GM10248 (cell line): ENCODE measurements at regions of chr1 and their contacts with region 1.

Region 1: GRCh38 chr1:86704458-86704971 is at the start of gene SH3GLB1:
- DNase-seq: peak; percentile 90
- CTCF ChIP-seq: peak; percentile 88

Region 2: GRCh38 chr1:86380257-86380861 is 324.2 kb before region 1 on chr1:
- CTCF ChIA-PET with region 1: interaction called, 17 read pairs
- POLR2A ChIA-PET with region 1: no interaction called
- DNase-seq: peak; percentile 37
- CTCF ChIP-seq: peak; percentile 70

Region 3: DNA sequence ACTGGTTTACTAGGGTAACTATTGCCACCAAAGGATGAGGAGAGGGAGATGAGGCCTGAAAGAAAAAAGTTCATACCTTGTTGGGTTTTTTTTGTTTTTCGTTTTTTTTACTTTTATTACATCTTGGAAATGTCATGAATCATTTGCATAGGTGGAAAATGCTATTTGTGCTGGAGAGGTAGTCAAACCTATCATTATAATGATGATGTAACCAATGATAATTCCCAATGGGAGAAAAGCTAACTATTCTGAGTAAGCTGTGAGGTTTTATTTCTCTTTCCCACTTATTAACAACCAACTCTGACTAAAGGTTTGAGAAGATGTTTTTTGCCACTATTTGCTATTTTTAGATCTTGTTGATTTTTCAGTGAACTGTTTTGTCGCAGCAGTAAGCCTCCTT is 28.8 kb after region 1 on chr1:
- CTCF ChIA-PET with region 1: interaction called, 18 read pairs
- POLR2A ChIA-PET with region 1: no interaction called
- DNase-seq: no peak
- CTCF ChIP-seq: no peak

Region 4: DNA sequence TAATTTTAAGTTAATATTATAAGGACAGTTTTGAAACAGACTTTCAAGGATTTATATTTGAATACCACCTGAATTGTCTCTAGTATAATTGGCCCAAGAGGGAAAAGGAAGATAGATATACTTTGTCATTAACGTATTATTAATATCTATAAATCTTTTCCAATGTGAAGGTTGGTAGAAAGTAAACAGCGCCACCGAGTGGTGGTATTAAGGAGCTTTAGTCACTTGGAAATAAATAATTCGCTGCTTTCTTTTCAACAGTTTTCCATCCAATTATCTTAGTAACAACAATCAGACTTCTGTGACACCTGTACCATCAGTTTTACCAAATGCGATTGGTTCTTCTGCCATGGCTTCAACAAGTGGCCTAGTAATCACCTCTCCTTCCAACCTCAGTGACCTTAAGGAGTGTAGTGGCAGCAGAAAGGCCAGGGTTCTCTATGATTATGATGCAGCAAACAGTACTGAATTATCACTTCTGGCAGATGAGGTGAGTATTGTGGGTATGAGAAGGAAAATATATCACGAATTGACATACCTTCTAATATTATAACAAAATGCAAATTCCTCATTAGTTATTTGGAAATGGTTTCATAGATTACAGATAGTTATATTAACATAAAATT is 37.5 kb after region 1 on chr1:
- CTCF ChIA-PET with region 1: interaction called, 12 read pairs
- POLR2A ChIA-PET with region 1: no interaction called
- DNase-seq: no peak
- CTCF ChIP-seq: peak; percentile 56

Region 5: GRCh38 chr1:86753700-86754099 is 49.2 kb after region 1 on chr1:
- CTCF ChIA-PET with region 1: interaction called, 15 read pairs
- POLR2A ChIA-PET with region 1: no interaction called
- DNase-seq: no peak
- CTCF ChIP-seq: peak; percentile 7